ENCODE measurements at regions of chr20 and their contacts with region 1.

Region 1: GRCh38 chr20:23995905-23996666 is 7.5 kb upstream of the GGTLC1 start:
- DNase-seq: peak; percentile 34 to 78 (median 62)
- ATAC-seq: peak; percentile 68
- H3K4me3 ChIP-seq: no peak overlapping the region
- H3K4me3 Mint-ChIP-seq: no peak overlapping the region
- H3K27ac ChIP-seq: no peak overlapping the region
- H3K27ac Mint-ChIP-seq: no peak overlapping the region
- H3K4me1 ChIP-seq: no peaks in the 10 kb centered on the region
- H3K4me1 Mint-ChIP-seq: no peaks in the 10 kb centered on the region
- H3K27me3 ChIP-seq: peaks cover 0 to 3% of the 10 kb centered on the region in 2 experiments
- H3K27me3 Mint-ChIP-seq: no peaks in the 10 kb centered on the region
- CTCF ChIP-seq: peak; percentile 75

Region 2: DNA sequence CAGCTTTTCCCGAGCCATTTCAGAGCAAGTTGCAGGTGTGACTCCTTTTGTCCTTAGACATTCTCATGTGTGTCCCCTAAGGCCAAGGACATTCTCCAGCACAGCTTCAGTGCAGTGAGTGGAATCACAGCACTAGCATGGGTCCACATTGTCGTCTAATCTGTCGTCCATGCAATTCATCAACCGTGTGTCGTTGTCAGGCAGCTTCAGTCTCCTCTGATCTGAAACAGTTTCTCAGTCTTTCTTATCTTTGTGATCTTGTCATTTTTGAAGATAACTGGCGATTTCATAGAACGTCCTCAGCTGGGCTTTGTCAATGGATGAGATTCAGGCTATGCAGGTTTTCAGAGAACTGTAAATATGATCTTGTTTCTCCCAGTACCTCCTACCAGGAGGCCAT is 201.2 kb before region 1 on chr20:
- CTCF ChIA-PET with region 1: no interaction called
- POLR2A ChIA-PET with region 1: no interaction called
- intact Hi-C with region 1: loop called in 1 of 2 experiments (anchors 5 kb)
- DNase-seq: no peak
- ATAC-seq: no peak
- H3K4me3 ChIP-seq: no peak overlapping the region
- H3K4me3 Mint-ChIP-seq: no peak overlapping the region
- H3K27ac ChIP-seq: no peak overlapping the region
- H3K27ac Mint-ChIP-seq: no peak overlapping the region
- H3K4me1 ChIP-seq: no peaks in the 10 kb centered on the region
- H3K4me1 Mint-ChIP-seq: no peaks in the 10 kb centered on the region
- H3K27me3 ChIP-seq: no peaks in the 10 kb centered on the region
- H3K27me3 Mint-ChIP-seq: peaks cover 12% of the 10 kb centered on the region
- CTCF ChIP-seq: no peak

Region 3: DNA sequence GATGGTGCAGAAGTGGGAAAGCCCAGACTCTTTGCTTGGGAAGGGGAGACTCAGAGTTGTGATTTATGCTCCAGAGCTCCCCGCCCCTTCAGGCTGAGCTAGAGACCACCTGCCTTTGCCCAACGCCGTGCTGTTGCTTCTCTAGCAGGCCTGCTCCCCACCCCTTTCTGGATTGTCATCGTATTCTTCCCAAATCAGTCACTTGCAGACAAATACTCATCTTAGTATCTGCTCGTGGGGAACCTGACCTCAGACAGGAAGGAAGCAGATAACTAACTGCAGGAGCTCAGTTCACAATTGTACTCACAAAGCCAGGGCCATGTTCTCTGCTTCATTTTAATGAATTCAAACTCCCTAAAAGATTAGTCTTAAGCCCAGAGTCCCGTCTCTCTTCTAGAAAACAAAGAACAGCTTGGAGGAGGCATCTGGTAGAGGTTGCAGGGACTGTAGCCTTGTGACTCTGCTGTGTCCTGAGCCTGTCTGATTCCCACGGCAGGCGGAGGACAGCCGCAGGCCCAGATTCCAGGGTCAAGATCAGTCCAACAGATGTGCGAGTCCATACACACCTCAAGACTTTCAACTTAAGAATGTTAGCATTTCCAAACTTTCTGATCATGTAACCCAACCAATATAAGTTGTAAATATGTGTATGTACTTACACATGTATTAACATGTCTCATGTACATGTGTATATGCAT is 49.7 kb after region 1 on chr20:
- CTCF ChIA-PET with region 1: no interaction called
- POLR2A ChIA-PET with region 1: no interaction called
- intact Hi-C with region 1: loop called in 1 of 2 experiments (anchors 2 kb)
- DNase-seq: peak in 4 of 14 experiments; percentile 29 to 45 (median 37)
- ATAC-seq: peak; percentile 88
- H3K4me3 ChIP-seq: no peak overlapping the region
- H3K4me3 Mint-ChIP-seq: peak overlapping the region; percentile 31
- H3K27ac ChIP-seq: peak overlapping the region in 1 of 2 donors; percentile 43
- H3K27ac Mint-ChIP-seq: peak overlapping the region; percentile 90
- H3K4me1 ChIP-seq: peaks cover 36% of the 10 kb centered on the region
- H3K4me1 Mint-ChIP-seq: peaks cover 61% of the 10 kb centered on the region
- H3K27me3 ChIP-seq: no peaks in the 10 kb centered on the region
- H3K27me3 Mint-ChIP-seq: no peaks in the 10 kb centered on the region
- CTCF ChIP-seq: no peak

Region 4: GRCh38 chr20:24100385-24101011 is 104.4 kb after region 1 on chr20:
- CTCF ChIA-PET with region 1: no interaction called
- POLR2A ChIA-PET with region 1: no interaction called
- intact Hi-C with region 1: loop called (anchors 2 to 5 kb)
- DNase-seq: peak; percentile 17 to 79 (median 54)
- ATAC-seq: peak; percentile 96
- H3K4me3 ChIP-seq: no peak overlapping the region
- H3K4me3 Mint-ChIP-seq: no peak overlapping the region
- H3K27ac ChIP-seq: no peak overlapping the region
- H3K27ac Mint-ChIP-seq: no peak overlapping the region
- H3K4me1 ChIP-seq: peaks cover 5% of the 10 kb centered on the region
- H3K4me1 Mint-ChIP-seq: no peaks in the 10 kb centered on the region
- H3K27me3 ChIP-seq: no peaks in the 10 kb centered on the region
- H3K27me3 Mint-ChIP-seq: peaks cover 5% of the 10 kb centered on the region
- CTCF ChIP-seq: peak; percentile 80

Measured in CD4-positive, alpha-beta T cell (primary cell).